Dendritic cell treated with granulocyte-macrophage colony-stimulating factor and Interleukin-4, amounts not matched to agents 40 ng/mL and 50 ng/mL, for 4 days (primary cell): ENCODE measurements at regions of chr3 and their contacts with region 1.

Region 1: DNA sequence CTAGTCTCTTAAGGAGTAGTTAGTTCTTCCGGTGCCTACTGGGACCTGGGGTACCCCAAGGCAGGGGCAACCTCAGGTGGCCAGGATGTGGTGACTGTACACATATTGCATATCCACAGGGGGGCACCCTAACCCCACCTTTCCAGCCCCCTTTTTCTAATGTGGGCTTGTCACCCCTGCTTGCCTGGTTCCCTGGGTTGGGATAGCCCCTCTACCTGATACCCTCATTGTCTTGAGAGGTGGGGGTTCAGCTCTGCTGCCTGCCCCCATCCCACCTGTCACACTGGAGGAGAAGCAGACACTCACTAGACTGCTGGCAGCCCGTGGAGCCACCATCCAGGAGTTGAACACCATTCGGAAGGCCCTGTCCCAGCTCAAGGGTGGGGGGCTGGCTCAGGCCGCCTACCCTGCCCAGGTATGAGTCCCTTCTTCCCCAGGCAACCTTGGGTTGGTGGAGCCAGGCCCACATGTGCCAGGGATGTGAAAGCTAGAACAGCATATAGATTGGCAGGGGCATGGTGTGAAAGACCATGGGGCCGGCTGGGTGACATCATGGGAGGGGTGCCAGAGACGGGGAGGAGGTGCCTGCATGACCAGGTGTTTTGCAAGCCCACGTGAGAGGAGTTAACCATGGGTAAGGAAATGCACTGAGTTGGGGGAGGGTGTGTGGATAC is 4.0 kb downstream of the GLYCTK start:
- H3K4me3 Mint-ChIP-seq: no peak overlapping the region
- H3K27ac Mint-ChIP-seq: no peak overlapping the region
- H3K4me1 Mint-ChIP-seq: peaks cover 31% of the 10 kb centered on the region
- H3K27me3 Mint-ChIP-seq: no peaks in the 10 kb centered on the region

Region 2: GRCh38 chr3:52245322-52246263 is 46.1 kb before region 1 on chr3 and contains the start of gene PPM1M:
- intact Hi-C with region 1: loop called (anchors 2 kb)
- H3K4me3 Mint-ChIP-seq: peak within 1 kb of the TSS; percentile 87
- H3K27ac Mint-ChIP-seq: peak within 1 kb of the TSS; percentile 100
- H3K4me1 Mint-ChIP-seq: peaks cover 78% of the 10 kb centered on the region
- H3K27me3 Mint-ChIP-seq: no peaks in the 10 kb centered on the region

Region 3: DNA sequence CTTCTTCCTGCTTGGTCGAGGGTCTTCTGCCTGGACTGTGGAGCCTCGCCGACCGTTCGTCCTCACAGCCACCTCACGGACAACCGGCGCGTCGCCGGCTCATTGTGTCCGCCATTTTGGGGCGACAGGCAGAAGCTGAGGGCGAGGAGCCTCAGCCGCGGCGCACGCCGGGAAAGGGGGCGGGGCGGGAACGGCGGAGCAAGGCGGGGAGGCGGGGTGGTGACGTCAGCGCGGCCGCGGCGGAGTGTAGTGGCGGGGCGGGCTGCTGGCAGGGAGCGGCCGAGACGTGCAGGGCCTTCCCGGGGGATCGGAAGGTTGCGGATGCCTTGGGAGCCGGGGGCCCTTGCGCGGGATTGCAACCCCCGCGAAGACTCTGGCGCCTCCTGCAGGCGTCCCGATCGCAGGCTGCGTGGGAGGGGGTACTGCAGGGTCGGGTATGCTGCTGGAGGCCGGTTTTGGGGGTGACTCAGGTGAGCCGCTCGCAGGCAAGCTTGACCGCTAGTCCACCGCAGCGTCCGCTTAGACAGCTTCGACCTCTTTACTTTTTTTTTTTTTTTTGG is 13.1 kb before region 1 on chr3 and contains the start of gene WDR82:
- intact Hi-C with region 1: loop called (anchors 1 kb)
- H3K4me3 Mint-ChIP-seq: peak within 1 kb of the TSS; percentile 91
- H3K27ac Mint-ChIP-seq: peak within 1 kb of the TSS; percentile 91
- H3K4me1 Mint-ChIP-seq: peaks cover 64% of the 10 kb centered on the region
- H3K27me3 Mint-ChIP-seq: no peaks in the 10 kb centered on the region

Region 4: DNA sequence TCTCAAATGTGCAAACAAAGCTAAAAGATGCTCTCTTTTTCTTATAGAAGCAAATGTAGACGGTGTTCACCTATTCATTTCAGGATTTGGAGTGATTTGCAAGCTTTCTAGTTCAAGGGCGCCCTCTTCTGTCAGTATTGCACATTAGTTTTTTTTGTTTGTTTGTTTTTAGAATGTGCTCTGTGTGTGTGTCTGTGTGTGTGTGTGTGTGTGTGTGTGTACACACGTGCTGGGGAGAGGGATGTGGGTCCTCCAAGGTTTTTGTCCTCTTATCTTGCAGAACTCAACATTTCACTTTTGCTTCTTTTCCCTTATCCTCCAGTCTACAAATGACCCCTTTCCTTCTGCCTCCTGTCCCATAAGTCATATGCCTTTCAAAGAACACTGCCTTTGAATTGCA is 48.0 kb after region 1 on chr3:
- intact Hi-C with region 1: loop called (anchors 1 kb)
- H3K4me3 Mint-ChIP-seq: no peak overlapping the region
- H3K27ac Mint-ChIP-seq: no peak overlapping the region
- H3K4me1 Mint-ChIP-seq: peaks cover 18% of the 10 kb centered on the region
- H3K27me3 Mint-ChIP-seq: no peaks in the 10 kb centered on the region